T-cell (primary cell): ENCODE measurements at regions of chr1 and their contacts with region 1.

Region 1: GRCh38 chr1:3453203-3453761 is 1.2 kb upstream of the ARHGEF16 start:
- DNase-seq: peak; percentile 24 to 82 (median 63)
- ATAC-seq: peak; percentile 59 to 81 (median 72)
- H3K4me3 ChIP-seq: no peak overlapping the region
- H3K4me3 Mint-ChIP-seq: peak overlapping the region; percentile 65 to 73 (median 72)
- H3K27ac ChIP-seq: no peak overlapping the region
- H3K27ac Mint-ChIP-seq: no peak overlapping the region
- H3K4me1 ChIP-seq: peaks cover 0 to 18% of the 10 kb centered on the region in 2 experiments
- H3K4me1 Mint-ChIP-seq: peaks cover 2 to 4% (median 3%) of the 10 kb centered on the region in 3 donors
- H3K27me3 ChIP-seq: peaks cover 0 to 40% of the 10 kb centered on the region in 2 experiments
- H3K27me3 Mint-ChIP-seq: peaks cover 9 to 14% of the 10 kb centered on the region in 2 donors

Region 2: DNA sequence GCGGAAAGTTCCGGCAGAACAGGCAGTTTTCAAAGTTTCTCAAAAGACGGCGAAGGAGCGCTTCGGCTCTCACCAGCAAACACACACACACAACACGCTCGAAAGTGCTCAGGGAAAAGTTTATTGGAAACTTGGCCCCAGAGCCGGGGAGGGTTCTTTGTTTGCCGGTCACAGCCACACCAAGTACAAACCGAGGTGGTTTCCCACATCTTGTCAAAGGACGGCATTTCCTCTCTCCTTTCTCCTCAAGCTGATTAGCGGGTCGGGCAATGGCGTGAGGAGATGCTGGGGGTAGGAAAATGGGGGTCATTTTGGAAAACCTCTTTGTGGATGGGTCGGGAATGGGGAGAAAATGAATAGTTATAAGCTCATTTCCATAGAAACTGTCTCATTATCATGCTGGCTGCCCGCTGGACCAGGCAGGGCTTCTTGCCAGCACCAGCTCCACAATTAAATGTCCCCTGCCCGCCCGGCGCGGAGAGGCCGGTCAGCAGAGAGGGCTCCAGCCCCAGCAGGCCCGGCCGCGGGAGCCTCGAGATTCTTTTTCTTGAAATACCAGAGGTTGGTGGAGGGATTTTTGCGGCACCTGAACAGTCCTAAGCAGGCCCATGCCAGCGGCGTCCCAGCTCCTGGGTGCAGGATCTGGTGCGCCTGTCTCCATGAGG is 292.0 kb before region 1 on chr1:
- CTCF ChIA-PET with region 1: no interaction called
- POLR2A ChIA-PET with region 1: no interaction called
- DNase-seq: peak in 1 of 35 experiments; percentile 5
- ATAC-seq: peak in 1 of 4 experiments; percentile 36
- H3K4me3 ChIP-seq: peak overlapping the region in 1 of 2 donors; percentile 56
- H3K4me3 Mint-ChIP-seq: peak overlapping the region; percentile 47 to 64 (median 56)
- H3K27ac ChIP-seq: no peak overlapping the region
- H3K27ac Mint-ChIP-seq: no peak overlapping the region
- H3K4me1 ChIP-seq: peaks cover 0 to 8% of the 10 kb centered on the region in 2 experiments
- H3K4me1 Mint-ChIP-seq: peaks cover 5 to 8% (median 7%) of the 10 kb centered on the region in 3 donors
- H3K27me3 ChIP-seq: peaks cover 0 to 30% of the 10 kb centered on the region in 2 experiments
- H3K27me3 Mint-ChIP-seq: peaks cover 7 to 42% of the 10 kb centered on the region in 2 donors

Region 3: DNA sequence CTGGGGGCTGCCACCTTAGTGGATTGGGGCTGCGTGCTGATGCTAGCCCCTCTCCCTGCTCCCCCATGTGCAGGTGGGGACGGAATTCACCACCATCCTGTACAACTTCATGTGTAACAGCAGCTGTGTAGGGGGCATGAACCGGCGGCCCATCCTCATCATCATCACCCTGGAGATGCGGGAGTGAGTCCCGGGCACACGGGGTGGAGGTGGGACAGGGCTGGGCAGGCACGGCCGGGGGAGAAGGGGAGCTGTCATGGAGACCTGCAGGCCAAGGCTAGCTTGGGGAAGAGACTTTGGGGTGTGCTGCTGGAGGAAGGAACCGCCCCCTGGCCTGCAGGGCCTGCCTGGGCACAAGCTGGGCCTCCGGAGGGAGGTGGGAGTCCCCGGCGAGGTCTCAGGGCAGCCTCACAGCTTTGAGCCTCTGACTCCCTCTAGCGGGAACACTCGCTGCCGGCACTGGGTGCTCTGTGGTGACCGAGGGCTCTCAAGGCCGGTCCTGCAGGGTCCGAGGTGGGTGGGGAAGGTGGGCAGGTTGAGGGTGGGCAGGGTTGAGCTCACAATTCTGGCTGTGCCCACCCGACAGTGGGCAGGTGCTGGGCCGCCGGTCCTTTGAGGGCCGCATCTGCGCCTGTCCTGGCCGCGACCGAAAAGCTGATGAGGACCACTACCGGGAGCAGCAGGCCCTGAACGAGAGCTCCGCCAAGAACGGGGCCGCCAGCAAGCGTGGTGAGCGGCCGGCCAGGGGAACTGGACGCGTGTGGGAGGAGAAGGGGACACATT is 274.0 kb after region 1 on chr1:
- CTCF ChIA-PET with region 1: interaction called in 1 of 2 experiments, 10 read pairs
- POLR2A ChIA-PET with region 1: no interaction called
- DNase-seq: peak in 1 of 35 experiments; percentile 9
- ATAC-seq: no peak
- H3K4me3 ChIP-seq: no peak overlapping the region
- H3K4me3 Mint-ChIP-seq: no peak overlapping the region
- H3K27ac ChIP-seq: no peak overlapping the region
- H3K27ac Mint-ChIP-seq: no peak overlapping the region
- H3K4me1 ChIP-seq: peaks cover 0 to 4% of the 10 kb centered on the region in 2 experiments
- H3K4me1 Mint-ChIP-seq: no peaks in the 10 kb centered on the region
- H3K27me3 ChIP-seq: peaks cover 0 to 55% of the 10 kb centered on the region in 2 experiments
- H3K27me3 Mint-ChIP-seq: peaks cover 7 to 8% of the 10 kb centered on the region in 2 donors